PC-9 (cell line): ENCODE measurements at regions of chr16 and their contacts with region 1.

Region 1: DNA sequence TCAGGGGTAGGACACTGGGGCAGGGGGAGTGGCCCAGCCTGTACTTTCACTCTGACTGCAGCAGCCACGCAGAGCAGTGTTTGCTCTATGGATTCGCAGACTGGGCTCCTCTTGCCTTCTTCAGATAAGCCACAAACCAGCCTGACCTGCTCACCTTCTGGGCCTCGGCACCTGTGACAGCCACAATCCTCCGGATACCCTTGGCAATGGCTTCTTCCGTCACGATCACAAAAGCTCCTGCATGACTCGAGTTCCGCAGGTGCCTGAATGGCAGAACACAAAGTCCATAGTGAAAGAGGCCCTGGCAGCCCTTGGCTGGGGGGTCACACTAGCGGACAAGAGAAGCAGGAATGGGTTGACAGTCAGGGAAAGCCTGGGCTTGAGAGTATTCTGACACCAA is 3.8 kb upstream of the EXOSC6 start:
- DNase-seq: no peak
- H3K4me3 ChIP-seq: no peak overlapping the region
- H3K27ac ChIP-seq: no peak overlapping the region
- H3K4me1 ChIP-seq: no peaks in the 10 kb centered on the region
- H3K27me3 ChIP-seq: no peaks in the 10 kb centered on the region
- CTCF ChIP-seq: no peak

Region 2: DNA sequence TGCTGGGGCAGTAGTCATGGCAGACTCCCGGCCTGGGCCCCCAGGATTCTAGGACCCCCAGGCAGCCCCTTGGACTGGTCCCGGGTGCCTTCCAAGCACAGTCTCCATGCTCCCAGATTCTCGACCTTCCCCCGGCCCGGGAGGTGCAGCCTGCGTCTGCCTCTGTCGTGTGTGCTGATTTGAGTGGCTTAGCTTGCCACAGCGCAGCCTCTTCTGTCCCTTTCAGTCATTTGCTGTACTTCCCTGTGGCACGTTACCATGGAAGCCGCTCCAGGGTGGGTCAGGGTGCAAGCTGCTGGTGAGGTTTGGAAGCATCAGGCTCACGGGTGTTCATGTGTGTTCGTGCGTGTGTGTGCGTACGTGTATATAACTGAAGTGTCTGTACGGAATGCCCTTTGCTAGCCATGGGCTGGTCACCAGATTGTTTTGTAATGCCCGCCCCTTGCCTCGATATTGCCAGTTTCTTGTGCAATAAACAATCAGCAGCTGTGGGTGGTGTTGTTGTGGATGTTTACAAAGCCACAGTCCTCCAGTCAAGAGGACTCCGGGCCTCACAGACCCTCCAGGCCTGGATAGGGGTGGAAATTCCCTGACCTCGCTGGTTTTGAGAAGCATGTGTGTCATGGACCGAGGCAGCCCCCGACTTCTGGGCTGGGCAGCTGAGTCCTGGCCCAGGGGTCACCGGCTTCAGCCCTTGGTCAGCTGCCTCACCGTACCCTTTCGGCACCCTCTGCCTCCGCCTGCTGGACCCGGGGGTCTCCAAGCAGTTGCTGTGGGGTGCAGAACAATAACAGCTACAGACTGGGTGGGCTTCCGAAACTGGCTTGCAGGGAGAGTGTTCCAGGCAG is 314.1 kb before region 1 on chr16:
- CTCF ChIA-PET with region 1: interaction called, 11 read pairs
- POLR2A ChIA-PET with region 1: no interaction called
- intact Hi-C with region 1: no loop called
- DNase-seq: no peak
- H3K4me3 ChIP-seq: no peak overlapping the region
- H3K27ac ChIP-seq: no peak overlapping the region
- H3K4me1 ChIP-seq: no peaks in the 10 kb centered on the region
- H3K27me3 ChIP-seq: no peaks in the 10 kb centered on the region
- CTCF ChIP-seq: no peak